ENCODE measurements at regions of chr17 and their contacts with region 1.

Region 1: DNA sequence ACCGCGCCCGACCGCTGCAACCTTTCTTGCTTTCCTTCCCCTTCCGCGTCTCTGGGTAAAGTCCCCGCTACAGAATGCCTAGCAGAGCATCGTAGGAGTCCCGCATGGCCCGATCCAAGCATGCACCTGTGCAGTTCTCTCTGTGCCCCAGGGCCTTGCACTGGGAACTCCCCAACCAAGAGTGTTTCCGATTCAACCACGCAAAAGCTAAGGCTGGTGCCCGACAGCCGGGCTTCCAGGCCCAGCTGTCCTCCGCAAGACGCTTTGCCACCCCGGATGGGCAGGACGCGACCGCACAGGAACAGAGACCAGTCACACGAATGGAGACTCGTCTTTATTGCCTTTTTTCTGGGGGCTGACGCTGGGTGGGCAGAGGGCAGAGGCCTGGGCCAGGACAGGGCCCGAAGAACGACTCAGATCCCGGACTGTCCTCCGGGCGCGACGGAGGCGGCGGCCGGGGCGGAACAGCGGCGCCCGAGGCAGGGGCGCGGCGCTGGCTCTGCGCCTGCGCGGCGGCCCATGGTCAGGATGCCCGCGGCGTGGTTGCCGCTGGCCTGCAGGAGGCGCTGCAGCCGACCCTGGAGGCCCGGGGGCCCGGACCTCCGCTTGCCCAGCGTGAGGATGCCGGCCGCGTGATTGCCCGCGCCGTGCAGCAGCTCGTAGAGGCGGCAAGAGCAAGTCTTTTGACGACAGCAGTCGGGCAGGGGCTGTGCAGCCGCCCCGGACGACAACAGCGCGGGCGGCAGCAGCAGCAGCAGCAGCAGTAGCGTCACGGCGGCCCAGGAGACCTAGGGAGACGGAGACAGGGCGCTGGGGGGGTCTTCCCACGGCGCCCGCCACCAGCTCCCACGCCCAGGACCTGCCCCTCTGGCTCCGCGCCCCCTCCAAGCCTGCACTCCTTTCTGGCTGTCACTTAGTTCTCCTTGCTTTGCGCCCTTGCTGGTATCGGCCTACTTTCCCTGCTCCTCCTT is 1.2 kb downstream of the HCRT start:
- DNase-seq: peak; percentile 61 to 84
- ATAC-seq: peak; percentile 76 to 88 (median 85)
- H3K4me3 ChIP-seq: peak overlapping the region; percentile 34 to 68 (median 58)
- H3K27ac ChIP-seq: peak overlapping the region in 9 of 10 donors; percentile 61 to 91 (median 79)
- H3K4me1 ChIP-seq: peaks cover 0 to 57% (median 35%) of the 10 kb centered on the region in 9 donors
- H3K27me3 ChIP-seq: peaks cover 0 to 28% (median 17%) of the 10 kb centered on the region in 7 donors
- CTCF ChIP-seq: peak; percentile 73 to 98 (median 86)

Region 2: DNA sequence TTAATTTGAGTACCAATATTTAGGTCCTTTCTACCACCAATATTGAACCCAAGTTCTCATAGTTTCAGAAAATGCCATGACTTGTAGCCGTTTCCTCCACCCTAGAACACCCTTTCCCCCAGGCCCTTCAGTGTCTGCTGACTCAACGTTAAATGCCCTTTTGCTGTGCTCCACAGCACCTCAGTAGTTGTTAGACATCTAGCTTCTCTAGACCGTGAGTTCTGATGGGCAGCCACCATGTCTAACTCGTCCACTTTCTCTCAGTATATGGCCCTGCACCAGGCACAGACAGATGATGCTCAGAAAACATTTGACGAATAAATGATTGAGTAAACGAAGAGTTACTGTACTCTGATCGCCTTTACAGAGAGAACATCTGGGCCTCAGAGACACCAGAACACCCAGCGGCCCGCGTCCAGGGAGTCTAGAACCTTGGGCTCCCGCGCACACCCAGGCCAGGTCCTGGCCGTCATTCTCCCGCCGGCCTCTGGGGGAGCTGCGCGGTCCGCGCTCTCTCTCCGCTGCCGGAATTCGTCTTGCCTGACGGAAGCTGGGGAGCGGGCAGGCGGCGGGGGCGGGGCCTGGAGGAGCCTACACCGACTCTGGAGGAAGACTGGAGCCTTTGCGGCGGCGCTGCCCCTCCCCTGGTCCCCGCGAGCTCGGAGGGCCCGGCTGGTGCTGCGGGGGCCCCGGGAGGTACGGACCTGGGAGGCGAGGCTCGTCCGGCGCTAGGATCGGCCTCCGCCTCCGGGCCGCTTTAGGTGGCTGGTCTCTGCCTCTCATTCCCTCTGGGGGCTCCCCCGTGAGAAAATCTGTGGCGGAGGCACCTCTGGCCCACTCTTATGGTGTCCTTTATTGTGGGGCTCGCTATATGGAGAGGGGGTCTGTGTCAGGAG is 164.3 kb before region 1 on chr17 and contains the start of gene NKIRAS2:
- intact Hi-C with region 1: loop called in 1 of 10 experiments (anchors 10 kb)
- DNase-seq: peak; percentile 94 to 95
- ATAC-seq: peak; percentile 76 to 84 (median 80)
- H3K4me3 ChIP-seq: peak within 1 kb of the TSS; percentile 73 to 98 (median 92)
- H3K27ac ChIP-seq: peak within 1 kb of the TSS; percentile 52 to 96 (median 90)
- H3K4me1 ChIP-seq: peaks cover 7 to 65% (median 49%) of the 10 kb centered on the region in 9 donors
- H3K27me3 ChIP-seq: no peaks in the 10 kb centered on the region
- CTCF ChIP-seq: peak; percentile 84 to 98 (median 96)
- total RNA-seq, gene NKIRAS2: 50.1 to 64.1 (median 57.2) TPM

Region 3: GRCh38 chr17:42112552-42113176 is 71.4 kb before region 1 on chr17 and contains the start of gene DHX58:
- intact Hi-C with region 1: loop called in 2 of 10 experiments (anchors 5 kb)
- DNase-seq: peak; percentile 56 to 82
- ATAC-seq: peak; percentile 65 to 93 (median 85)
- H3K4me3 ChIP-seq: peak within 1 kb of the TSS; percentile 16 to 69 (median 62)
- H3K27ac ChIP-seq: peak within 1 kb of the TSS; percentile 69 to 93 (median 90)
- H3K4me1 ChIP-seq: peaks cover 7 to 37% (median 17%) of the 10 kb centered on the region in 9 donors
- H3K27me3 ChIP-seq: no peaks in the 10 kb centered on the region
- CTCF ChIP-seq: peak in 1 of 9 donors; percentile 9
- total RNA-seq, gene DHX58: 2.2 to 8.4 (median 4.0) TPM

Region 4: DNA sequence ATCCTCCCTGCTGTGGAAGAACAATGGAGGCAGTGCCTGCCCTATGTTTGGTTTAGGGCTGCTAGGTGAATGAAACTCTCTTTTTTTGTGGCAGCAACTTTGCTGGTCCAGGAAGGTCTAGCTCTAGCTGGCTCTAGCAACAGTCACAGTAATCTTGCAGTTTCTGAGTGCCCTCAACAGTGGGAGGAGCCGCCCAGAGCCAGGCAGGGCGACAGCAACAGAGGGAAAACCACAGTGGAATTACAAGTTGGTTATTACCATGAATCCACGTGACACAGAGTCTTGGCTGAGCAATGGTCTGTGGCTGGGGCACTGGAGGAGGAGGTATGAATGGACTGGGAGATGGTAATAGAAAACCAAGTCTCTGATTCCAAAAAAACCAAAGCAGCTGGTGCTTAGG is 51.1 kb before region 1 on chr17:
- intact Hi-C with region 1: loop called in 2 of 10 experiments (anchors 5 kb)
- DNase-seq: peak in 1 of 2 donors; percentile 46
- ATAC-seq: peak; percentile 13 to 56 (median 32)
- H3K4me3 ChIP-seq: peak overlapping the region in 3 of 10 donors; percentile 1 to 25 (median 9)
- H3K27ac ChIP-seq: peak overlapping the region; percentile 66 to 87 (median 80)
- H3K4me1 ChIP-seq: peaks cover 43 to 98% (median 90%) of the 10 kb centered on the region in 9 donors
- H3K27me3 ChIP-seq: no peaks in the 10 kb centered on the region
- CTCF ChIP-seq: no peak

Region 5: DNA sequence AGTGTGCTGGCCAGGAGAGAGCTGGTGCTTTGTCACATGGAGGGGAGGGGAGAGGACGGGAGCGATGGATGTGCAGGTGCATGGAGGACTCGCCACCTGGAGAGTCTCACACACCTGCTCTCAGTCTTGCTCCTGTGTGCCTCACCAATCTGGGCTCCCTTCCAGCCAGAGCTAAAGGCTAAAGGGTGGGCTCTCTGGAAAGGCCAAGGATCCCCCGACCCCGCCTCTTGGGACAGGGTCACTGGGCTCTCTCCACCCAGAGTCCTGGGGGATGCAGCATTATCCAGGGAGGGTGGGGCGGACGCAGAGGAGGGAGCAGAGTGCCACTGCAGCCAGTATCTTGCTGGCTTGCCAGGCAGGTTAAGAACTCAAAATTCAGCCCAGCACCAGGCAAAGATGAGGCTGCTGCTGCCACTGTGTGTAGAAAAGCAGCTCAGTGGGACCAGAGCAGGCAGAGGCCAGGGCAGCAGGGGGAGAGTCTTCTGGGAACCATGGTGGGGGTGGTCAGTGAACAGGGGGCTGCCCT is 97.6 kb after region 1 on chr17:
- intact Hi-C with region 1: loop called in 1 of 10 experiments (anchors 5 kb)
- DNase-seq: no peak
- ATAC-seq: no peak
- H3K4me3 ChIP-seq: no peak overlapping the region
- H3K27ac ChIP-seq: no peak overlapping the region
- H3K4me1 ChIP-seq: peaks cover 3 to 19% (median 12%) of the 10 kb centered on the region in 9 donors
- H3K27me3 ChIP-seq: no peaks in the 10 kb centered on the region
- CTCF ChIP-seq: no peak